A549 (cell line): ENCODE measurements at regions of chr19 and their contacts with region 1.

Region 1: GRCh38 chr19:35495107-35496064 is 5.1 kb upstream of the KRTDAP start:
- DNase-seq: peak; percentile 81 to 97
- ATAC-seq: peak; percentile 90 to 95
- H3K4me3 ChIP-seq: peak overlapping the region; percentile 24; the same call in 2 of the 3 replicates
- H3K27ac ChIP-seq: peak overlapping the region; percentile 35 to 64; a peak in 3 of 6 replicates
- H3K4me1 ChIP-seq: no peaks in the 10 kb centered on the region; the same call in 2 of the 3 replicates
- CTCF ChIP-seq: peak; percentile 96
- EP300 ChIP-seq: no peak
- POLR2A ChIP-seq: no peak
- RAD21 ChIP-seq: peak; percentile 83 to 85

Region 2: GRCh38 chr19:35330475-35330874 is 164.9 kb before region 1 on chr19:
- CTCF ChIA-PET with region 1: interaction called, 10 read pairs
- POLR2A ChIA-PET with region 1: no interaction called
- DNase-seq: no peak
- ATAC-seq: no peak
- H3K4me3 ChIP-seq: no peak overlapping the region
- H3K27ac ChIP-seq: no peak overlapping the region
- H3K4me1 ChIP-seq: no peaks in the 10 kb centered on the region
- CTCF ChIP-seq: no peak
- EP300 ChIP-seq: no peak
- POLR2A ChIP-seq: no peak
- RAD21 ChIP-seq: no peak

Region 3: GRCh38 chr19:35363001-35363590 is 132.3 kb before region 1 on chr19:
- CTCF ChIA-PET with region 1: interaction called, 256 read pairs
- POLR2A ChIA-PET with region 1: no interaction called
- DNase-seq: no peak
- ATAC-seq: peak in 1 of 2 experiments; percentile 9; a peak in 3 of 6 replicates
- H3K4me3 ChIP-seq: no peak overlapping the region
- H3K27ac ChIP-seq: no peak overlapping the region
- H3K4me1 ChIP-seq: no peaks in the 10 kb centered on the region
- CTCF ChIP-seq: no peak
- EP300 ChIP-seq: no peak
- POLR2A ChIP-seq: no peak
- RAD21 ChIP-seq: no peak

Region 4: GRCh38 chr19:35462476-35462953 is 32.9 kb before region 1 on chr19:
- CTCF ChIA-PET with region 1: interaction called, 22 read pairs
- POLR2A ChIA-PET with region 1: no interaction called
- DNase-seq: no peak
- ATAC-seq: no peak
- H3K4me3 ChIP-seq: no peak overlapping the region
- H3K27ac ChIP-seq: no peak overlapping the region
- H3K4me1 ChIP-seq: peaks cover 17% of the 10 kb centered on the region
- CTCF ChIP-seq: no peak
- EP300 ChIP-seq: no peak
- POLR2A ChIP-seq: no peak
- RAD21 ChIP-seq: no peak

Region 5: DNA sequence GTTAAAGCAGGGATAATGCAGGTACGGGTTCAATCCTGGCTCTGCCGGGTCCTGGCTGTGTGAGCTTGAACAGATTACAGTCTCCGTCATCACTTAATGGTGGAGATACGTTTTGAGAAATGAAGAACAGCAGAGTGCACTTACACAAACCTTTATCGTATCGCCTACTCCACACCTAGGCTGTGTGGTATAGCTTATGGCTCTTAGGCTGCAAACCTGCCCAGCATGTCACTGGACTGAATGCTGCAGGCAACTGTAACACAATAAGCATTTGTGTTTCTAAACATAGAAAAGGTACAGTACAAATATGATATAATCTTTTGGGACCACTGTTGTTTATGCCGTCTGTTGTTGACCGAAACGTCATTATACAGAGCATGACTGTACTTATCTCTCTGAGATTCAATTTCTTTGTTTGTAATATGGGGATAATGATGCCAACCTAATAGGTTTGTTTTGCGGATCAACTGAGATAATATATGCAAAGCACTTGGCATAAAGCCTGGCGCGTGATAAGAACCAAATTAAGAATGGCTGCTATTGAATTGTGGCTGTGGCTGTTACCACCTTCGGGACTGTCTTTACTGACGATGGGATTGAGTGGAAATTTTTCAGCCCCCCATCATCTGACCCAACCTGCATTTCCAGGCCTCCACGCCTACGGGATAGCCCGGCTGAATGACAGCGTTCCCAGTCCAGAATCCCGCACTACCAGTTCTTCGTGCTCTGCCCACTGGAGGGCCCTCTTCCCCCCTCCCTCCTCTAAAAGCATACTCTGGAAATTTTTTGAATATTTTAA is 16.4 kb before region 1 on chr19:
- CTCF ChIA-PET with region 1: interaction called, 86 read pairs
- POLR2A ChIA-PET with region 1: no interaction called
- DNase-seq: no peak
- ATAC-seq: 0 out of 6 replicates have a peak, but pooled peaks of 1 of the 2 experiments have one; percentile 36
- H3K4me3 ChIP-seq: no peak overlapping the region
- H3K27ac ChIP-seq: no peak overlapping the region
- H3K4me1 ChIP-seq: no peaks in the 10 kb centered on the region
- CTCF ChIP-seq: no peak
- EP300 ChIP-seq: no peak
- POLR2A ChIP-seq: no peak
- RAD21 ChIP-seq: no peak

Region 6: DNA sequence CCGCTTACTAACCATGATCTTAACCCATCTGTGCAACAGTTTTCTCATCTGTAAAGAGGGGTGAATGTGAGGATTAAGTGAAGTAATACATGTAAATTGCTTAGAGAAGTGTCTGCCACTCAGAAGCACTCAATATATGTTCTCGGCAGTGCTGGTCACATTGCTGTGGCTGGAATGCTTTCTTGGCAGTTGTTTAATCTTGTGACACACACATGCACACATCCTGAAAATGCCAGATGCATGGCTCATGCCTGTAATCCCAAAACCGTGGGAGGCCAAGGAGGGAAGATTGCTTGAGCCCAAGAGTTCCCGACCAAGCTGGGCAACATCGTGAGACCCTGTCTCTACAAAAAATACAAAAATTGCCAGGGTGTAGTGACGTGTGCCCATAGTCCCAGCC is 22.9 kb after region 1 on chr19:
- CTCF ChIA-PET with region 1: interaction called, 50 read pairs
- POLR2A ChIA-PET with region 1: no interaction called
- DNase-seq: peak; percentile 62 to 72
- ATAC-seq: peak; percentile 68 to 69
- H3K4me3 ChIP-seq: no peak overlapping the region
- H3K27ac ChIP-seq: peak overlapping the region; percentile 46 to 47; a peak in 4 of 6 replicates
- H3K4me1 ChIP-seq: peaks cover 23% of the 10 kb centered on the region
- CTCF ChIP-seq: no peak
- EP300 ChIP-seq: no peak
- POLR2A ChIP-seq: no peak
- RAD21 ChIP-seq: no peak

Region 7: DNA sequence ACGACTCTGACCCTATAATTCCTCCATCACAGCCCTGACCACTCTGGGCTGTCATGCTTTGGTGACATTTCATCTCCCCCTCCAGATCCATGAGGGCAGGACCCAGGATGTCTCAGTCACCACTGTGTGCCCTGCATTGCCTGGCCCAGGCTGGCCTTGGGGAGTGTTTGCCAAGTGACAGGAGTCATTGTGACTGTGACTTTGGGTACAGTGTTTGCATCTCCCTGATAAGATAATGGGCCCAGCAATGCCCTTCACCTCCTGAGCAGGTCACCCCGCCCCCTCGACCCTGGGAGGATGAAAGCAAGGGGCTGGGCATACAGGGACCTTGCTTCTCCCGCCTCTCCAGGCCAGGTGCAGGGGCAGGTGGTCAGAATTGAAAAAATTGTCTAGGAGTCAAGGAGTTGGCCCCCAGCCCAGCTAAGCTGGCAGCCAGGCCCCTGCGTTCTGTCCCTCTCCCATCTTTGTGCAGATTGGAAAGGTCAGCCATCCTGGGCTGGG is 73.9 kb after region 1 on chr19:
- CTCF ChIA-PET with region 1: no interaction called
- POLR2A ChIA-PET with region 1: no interaction called
- DNase-seq: no peak
- ATAC-seq: no peak
- H3K4me3 ChIP-seq: no peak overlapping the region
- H3K27ac ChIP-seq: no peak overlapping the region
- H3K4me1 ChIP-seq: no peaks in the 10 kb centered on the region
- CTCF ChIP-seq: no peak
- EP300 ChIP-seq: no peak
- POLR2A ChIP-seq: no peak
- RAD21 ChIP-seq: no peak